ENCODE measurements at regions of chr2 and their contacts with region 1.

Region 1: GRCh38 chr2:37523814-37524362 is 147.6 kb downstream of the CDC42EP3 start:
- DNase-seq: no peak
- ATAC-seq: no peak
- H3K4me3 Mint-ChIP-seq: no peak overlapping the region
- H3K27ac Mint-ChIP-seq: no peak overlapping the region
- H3K4me1 Mint-ChIP-seq: no peaks in the 10 kb centered on the region
- H3K27me3 Mint-ChIP-seq: no peaks in the 10 kb centered on the region

Region 2: GRCh38 chr2:37543999-37544557 is 20.2 kb after region 1 on chr2:
- CTCF ChIA-PET with region 1: no interaction called
- POLR2A ChIA-PET with region 1: no interaction called
- intact Hi-C with region 1: loop called in 1 of 2 experiments (anchors 2 kb)
- DNase-seq: no peak
- ATAC-seq: no peak
- H3K4me3 Mint-ChIP-seq: no peak overlapping the region
- H3K27ac Mint-ChIP-seq: no peak overlapping the region
- H3K4me1 Mint-ChIP-seq: no peaks in the 10 kb centered on the region
- H3K27me3 Mint-ChIP-seq: no peaks in the 10 kb centered on the region